CD4-positive, alpha-beta memory T cell (primary cell): ENCODE measurements at regions of chr13 and their contacts with region 1.

Region 1: GRCh38 chr13:19863323-19864023 is at the start of gene ZMYM5:
- DNase-seq: peak; percentile 90 to 95 (median 92)
- H3K4me3 ChIP-seq: peak within 1 kb of the TSS; percentile 61 to 96
- H3K4me3 Mint-ChIP-seq: peak within 1 kb of the TSS; percentile 96 to 99 (median 98)
- H3K27ac ChIP-seq: peak within 1 kb of the TSS; percentile 81
- H3K27ac Mint-ChIP-seq: peak within 1 kb of the TSS; percentile 90 to 98 (median 96)
- H3K4me1 ChIP-seq: peaks cover 33% of the 10 kb centered on the region
- H3K4me1 Mint-ChIP-seq: peaks cover 23 to 47% (median 35%) of the 10 kb centered on the region in 4 donors
- H3K27me3 ChIP-seq: no peaks in the 10 kb centered on the region
- H3K27me3 Mint-ChIP-seq: no peaks in the 10 kb centered on the region
- total RNA-seq, gene ZMYM5: 25.1 to 25.5 TPM

Region 2: DNA sequence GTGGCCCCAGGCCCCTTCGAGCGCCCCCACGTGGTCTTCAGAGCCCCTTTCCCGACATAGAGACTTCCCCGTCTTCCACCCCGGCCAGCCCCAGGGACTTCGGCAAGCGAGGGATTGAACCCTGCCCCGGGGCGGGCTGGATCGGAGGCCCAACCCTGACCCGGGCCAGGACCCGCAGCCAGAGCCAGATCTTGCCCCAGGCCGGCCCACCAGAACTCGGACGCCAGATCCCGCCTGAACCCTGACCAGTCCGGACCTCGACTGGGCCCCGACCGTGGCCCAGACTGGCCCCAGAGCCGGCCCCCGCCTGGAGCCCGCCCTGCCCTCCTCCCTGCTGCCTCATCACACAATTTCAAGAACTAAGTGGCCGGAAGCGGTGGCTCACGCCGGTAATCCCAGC is 301.9 kb before region 1 on chr13:
- CTCF ChIA-PET with region 1: no interaction called
- POLR2A ChIA-PET with region 1: no interaction called
- intact Hi-C with region 1: no loop called
- DNase-seq: no peak
- H3K4me3 ChIP-seq: no peak overlapping the region
- H3K4me3 Mint-ChIP-seq: no peak overlapping the region
- H3K27ac ChIP-seq: no peak overlapping the region
- H3K27ac Mint-ChIP-seq: no peak overlapping the region
- H3K4me1 ChIP-seq: no peaks in the 10 kb centered on the region
- H3K4me1 Mint-ChIP-seq: peaks cover 0 to 1% (median 0%) of the 10 kb centered on the region in 4 donors
- H3K27me3 ChIP-seq: no peaks in the 10 kb centered on the region
- H3K27me3 Mint-ChIP-seq: no peaks in the 10 kb centered on the region

Region 3: DNA sequence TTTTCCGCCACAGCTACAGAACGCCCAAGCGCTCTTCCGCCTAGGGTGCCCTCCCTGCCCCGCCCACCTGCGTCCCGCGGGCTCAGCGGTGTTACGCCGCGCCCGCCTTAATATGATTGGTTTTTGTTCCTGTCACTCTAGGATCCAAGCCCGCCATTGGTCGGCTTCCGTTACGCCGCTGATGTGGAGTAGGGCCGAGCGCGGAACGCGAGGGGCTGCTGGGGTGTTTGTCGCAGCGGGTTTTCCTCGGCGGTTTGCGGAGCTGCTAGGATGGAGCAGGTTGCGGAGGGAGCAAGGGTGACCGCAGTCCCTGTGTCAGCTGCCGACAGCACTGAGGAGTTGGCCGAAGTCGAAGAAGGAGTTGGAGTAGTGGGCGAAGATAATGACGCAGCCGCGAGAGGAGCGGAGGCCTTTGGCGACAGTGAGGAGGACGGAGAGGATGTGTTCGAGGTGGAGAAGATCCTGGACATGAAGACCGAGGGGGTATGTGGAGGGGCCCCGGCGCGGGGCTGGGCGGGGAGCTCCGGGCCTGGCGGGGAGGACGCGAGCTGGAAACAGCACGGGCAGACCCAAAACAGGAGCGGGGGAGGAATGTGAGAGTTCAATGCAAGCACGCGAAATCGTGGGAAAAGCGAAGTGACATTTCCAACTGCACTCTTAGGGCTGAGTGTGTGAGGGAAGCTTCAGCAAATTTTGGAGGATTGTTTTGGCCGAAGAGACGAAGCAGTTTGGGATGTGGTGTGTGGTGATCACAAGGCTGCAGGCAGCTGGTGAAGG is 229.8 kb before region 1 on chr13 and contains the start of gene MPHOSPH8:
- CTCF ChIA-PET with region 1: interaction called, 3 read pairs
- POLR2A ChIA-PET with region 1: interaction called, 37 read pairs
- intact Hi-C with region 1: loop called (anchors 1 kb)
- DNase-seq: peak; percentile 92 to 93 (median 93)
- H3K4me3 ChIP-seq: peak within 1 kb of the TSS; percentile 71 to 90
- H3K4me3 Mint-ChIP-seq: peak within 1 kb of the TSS; percentile 100
- H3K27ac ChIP-seq: peak within 1 kb of the TSS; percentile 94
- H3K27ac Mint-ChIP-seq: peak within 1 kb of the TSS; percentile 95 to 100 (median 99)
- H3K4me1 ChIP-seq: peaks cover 42% of the 10 kb centered on the region
- H3K4me1 Mint-ChIP-seq: peaks cover 26 to 52% (median 34%) of the 10 kb centered on the region in 4 donors
- H3K27me3 ChIP-seq: no peaks in the 10 kb centered on the region
- H3K27me3 Mint-ChIP-seq: peaks cover 0 to 4% of the 10 kb centered on the region in 2 donors
- total RNA-seq, gene MPHOSPH8: 131 to 136 TPM

Region 4: GRCh38 chr13:19810001-19810555 is 53.4 kb before region 1 on chr13:
- CTCF ChIA-PET with region 1: no interaction called
- POLR2A ChIA-PET with region 1: no interaction called
- intact Hi-C with region 1: no loop called
- DNase-seq: no peak
- H3K4me3 ChIP-seq: no peak overlapping the region
- H3K4me3 Mint-ChIP-seq: no peak overlapping the region
- H3K27ac ChIP-seq: no peak overlapping the region
- H3K27ac Mint-ChIP-seq: no peak overlapping the region
- H3K4me1 ChIP-seq: no peaks in the 10 kb centered on the region
- H3K4me1 Mint-ChIP-seq: no peaks in the 10 kb centered on the region
- H3K27me3 ChIP-seq: no peaks in the 10 kb centered on the region
- H3K27me3 Mint-ChIP-seq: no peaks in the 10 kb centered on the region

Region 5: DNA sequence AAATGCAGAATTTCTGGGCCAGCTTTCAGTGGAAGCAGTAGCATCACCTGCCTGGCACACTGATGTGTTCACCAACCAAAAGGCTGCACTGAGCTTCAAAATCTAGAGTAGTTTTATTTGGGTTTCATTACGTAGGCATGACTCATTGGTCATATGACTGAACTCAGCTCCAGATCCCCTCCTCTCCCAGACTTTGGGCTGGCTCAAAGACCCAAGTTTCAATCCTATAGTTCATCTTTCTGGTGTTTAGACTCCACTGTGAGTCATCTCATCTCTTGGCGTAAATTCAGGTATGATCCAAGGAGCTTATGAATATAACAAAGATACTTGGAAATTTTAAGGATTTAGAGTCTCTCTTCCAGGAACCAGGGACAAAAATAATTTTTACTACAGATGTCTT is 17.7 kb before region 1 on chr13:
- CTCF ChIA-PET with region 1: interaction called, 4 read pairs
- POLR2A ChIA-PET with region 1: interaction called, 18 read pairs
- intact Hi-C with region 1: no loop called
- DNase-seq: no peak
- H3K4me3 ChIP-seq: no peak overlapping the region
- H3K4me3 Mint-ChIP-seq: no peak overlapping the region
- H3K27ac ChIP-seq: no peak overlapping the region
- H3K27ac Mint-ChIP-seq: peak overlapping the region in 3 of 7 donors; percentile 46 to 78 (median 72)
- H3K4me1 ChIP-seq: peaks cover 17% of the 10 kb centered on the region
- H3K4me1 Mint-ChIP-seq: peaks cover 9 to 26% (median 12%) of the 10 kb centered on the region in 4 donors
- H3K27me3 ChIP-seq: no peaks in the 10 kb centered on the region
- H3K27me3 Mint-ChIP-seq: no peaks in the 10 kb centered on the region

Region 6: GRCh38 chr13:19959831-19960652 is 96.6 kb after region 1 on chr13:
- CTCF ChIA-PET with region 1: interaction called, 7 read pairs
- POLR2A ChIA-PET with region 1: interaction called, 41 read pairs
- intact Hi-C with region 1: loop called (anchors 1 kb)
- DNase-seq: peak; percentile 85 to 94 (median 89)
- H3K4me3 ChIP-seq: peak overlapping the region; percentile 51 to 53
- H3K4me3 Mint-ChIP-seq: peak overlapping the region; percentile 93 to 98 (median 94)
- H3K27ac ChIP-seq: peak overlapping the region; percentile 90
- H3K27ac Mint-ChIP-seq: peak overlapping the region; percentile 93 to 99 (median 96)
- H3K4me1 ChIP-seq: peaks cover 50% of the 10 kb centered on the region
- H3K4me1 Mint-ChIP-seq: peaks cover 20 to 40% (median 31%) of the 10 kb centered on the region in 4 donors
- H3K27me3 ChIP-seq: no peaks in the 10 kb centered on the region
- H3K27me3 Mint-ChIP-seq: no peaks in the 10 kb centered on the region

Region 7: GRCh38 chr13:20118268-20119140 is 255.0 kb after region 1 on chr13:
- CTCF ChIA-PET with region 1: no interaction called
- POLR2A ChIA-PET with region 1: interaction called, 10 read pairs
- intact Hi-C with region 1: no loop called
- DNase-seq: peak in 2 of 5 donors; percentile 12 to 23
- H3K4me3 ChIP-seq: peak overlapping the region; percentile 57 to 62
- H3K4me3 Mint-ChIP-seq: peak overlapping the region; percentile 87 to 94 (median 91)
- H3K27ac ChIP-seq: peak overlapping the region; percentile 42
- H3K27ac Mint-ChIP-seq: peak overlapping the region; percentile 73 to 98 (median 91)
- H3K4me1 ChIP-seq: peaks cover 20% of the 10 kb centered on the region
- H3K4me1 Mint-ChIP-seq: peaks cover 10 to 27% (median 23%) of the 10 kb centered on the region in 4 donors
- H3K27me3 ChIP-seq: no peaks in the 10 kb centered on the region
- H3K27me3 Mint-ChIP-seq: no peaks in the 10 kb centered on the region